Caco-2 (cell line): ENCODE measurements at regions of chr1 and their contacts with region 1.

Region 1: DNA sequence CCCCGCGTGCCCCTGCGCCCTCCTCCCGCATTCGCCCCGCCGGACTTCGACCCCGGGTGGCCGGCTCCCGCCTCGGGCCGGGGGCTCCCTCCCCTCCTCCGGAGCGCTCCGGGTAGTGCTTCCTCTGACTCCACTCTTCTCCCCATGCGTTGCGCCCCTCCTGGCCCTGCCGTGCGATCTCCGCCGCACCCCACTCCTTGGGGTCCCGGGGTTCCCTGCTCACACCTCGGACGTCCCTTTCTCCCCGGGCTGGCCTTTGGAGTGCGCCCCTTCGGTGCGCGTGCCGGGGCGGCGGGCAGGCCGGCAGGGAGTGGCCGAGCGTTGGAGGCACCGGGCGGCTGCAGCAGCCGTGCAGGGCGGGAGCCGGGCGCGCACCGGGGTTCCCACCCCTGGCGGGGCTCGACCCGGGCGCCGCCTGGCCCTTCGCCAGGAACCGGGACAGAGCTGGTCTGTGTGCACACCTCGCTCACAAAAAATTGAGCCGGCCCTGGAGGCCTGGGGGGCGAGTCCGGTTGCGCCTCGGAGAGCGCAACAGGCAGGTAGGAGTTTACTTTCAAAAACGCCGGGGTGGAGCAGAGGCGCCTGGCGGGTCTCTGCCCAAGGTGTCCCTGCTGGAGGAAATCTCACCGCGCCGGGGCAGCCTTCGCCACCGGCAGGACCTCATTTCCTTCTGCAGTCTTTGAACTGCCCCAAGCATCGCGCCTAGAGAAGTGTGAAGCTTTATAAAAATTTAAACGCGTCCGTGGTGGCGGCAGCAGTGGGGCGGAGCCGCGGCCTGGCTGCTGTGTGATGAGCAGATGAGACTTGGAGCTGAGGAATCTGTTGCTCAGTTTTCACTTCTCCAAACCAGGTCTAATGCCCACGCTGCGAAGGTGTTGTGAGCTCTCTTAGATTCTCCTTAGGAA is 650 bp downstream of the VANGL1 start:
- DNase-seq: peak; percentile 64 to 66
- H3K4me3 ChIP-seq: peak overlapping the region; percentile 78
- H3K4me3 Mint-ChIP-seq: peak overlapping the region; percentile 92
- H3K27ac Mint-ChIP-seq: peak overlapping the region; percentile 76
- H3K4me1 ChIP-seq: peaks cover 20% of the 10 kb centered on the region
- H3K4me1 Mint-ChIP-seq: peaks cover 4% of the 10 kb centered on the region
- H3K27me3 ChIP-seq: no peaks in the 10 kb centered on the region
- H3K27me3 Mint-ChIP-seq: no peaks in the 10 kb centered on the region
- CTCF ChIP-seq: peak in 1 of 2 experiments; percentile 30

Region 2: DNA sequence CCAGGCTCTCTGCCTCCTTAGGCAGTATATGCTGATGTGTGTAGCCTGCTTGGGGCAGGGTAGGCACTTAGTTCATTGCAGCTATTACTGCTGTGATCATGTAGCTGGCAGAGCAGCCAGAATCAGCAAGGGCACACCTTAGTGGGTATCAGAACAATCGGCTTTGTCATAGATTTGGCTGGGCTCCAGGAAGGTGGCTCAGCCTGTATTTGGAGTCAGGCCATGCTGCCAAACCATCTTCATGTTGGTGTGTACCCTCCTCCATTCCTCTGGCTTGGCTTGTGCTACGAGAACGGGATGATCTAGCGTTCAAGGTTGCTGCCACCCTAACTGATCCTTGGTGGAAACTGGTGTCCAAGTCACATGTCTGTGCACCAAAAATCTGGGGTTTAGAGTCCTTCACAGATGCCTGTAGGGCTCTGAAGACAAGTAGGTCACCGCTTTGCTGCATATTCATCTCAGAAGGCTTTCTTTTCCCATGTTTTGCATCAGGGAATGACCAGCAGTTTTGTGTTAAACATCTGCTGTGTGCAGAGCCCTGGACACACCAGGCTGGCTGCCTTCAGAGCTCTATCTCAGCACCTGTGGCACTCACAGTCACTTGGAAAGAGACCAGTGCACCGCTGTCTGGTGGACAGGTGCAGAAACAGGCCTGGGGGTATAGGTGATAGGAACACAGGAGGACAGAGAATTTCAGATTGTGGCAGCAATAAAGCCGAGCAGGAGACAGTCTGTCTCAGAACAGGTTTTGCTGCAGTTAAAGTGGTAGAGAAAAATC is 23.1 kb after region 1 on chr1:
- CTCF ChIA-PET with region 1: no interaction called
- POLR2A ChIA-PET with region 1: no interaction called
- intact Hi-C with region 1: no loop called
- DNase-seq: no peak
- H3K4me3 ChIP-seq: no peak overlapping the region
- H3K4me3 Mint-ChIP-seq: no peak overlapping the region
- H3K27ac Mint-ChIP-seq: no peak overlapping the region
- H3K4me1 ChIP-seq: peaks cover 7% of the 10 kb centered on the region
- H3K4me1 Mint-ChIP-seq: no peaks in the 10 kb centered on the region
- H3K27me3 ChIP-seq: no peaks in the 10 kb centered on the region
- H3K27me3 Mint-ChIP-seq: no peaks in the 10 kb centered on the region
- CTCF ChIP-seq: no peak

Region 3: GRCh38 chr1:115764541-115764940 is 122.1 kb after region 1 on chr1:
- CTCF ChIA-PET with region 1: interaction called, 4 read pairs
- POLR2A ChIA-PET with region 1: no interaction called
- intact Hi-C with region 1: loop called (anchors 2 kb)
- DNase-seq: peak; percentile 47 to 57
- H3K4me3 ChIP-seq: no peak overlapping the region
- H3K4me3 Mint-ChIP-seq: no peak overlapping the region
- H3K27ac Mint-ChIP-seq: no peak overlapping the region
- H3K4me1 ChIP-seq: no peaks in the 10 kb centered on the region
- H3K4me1 Mint-ChIP-seq: peaks cover 11% of the 10 kb centered on the region
- H3K27me3 ChIP-seq: no peaks in the 10 kb centered on the region
- H3K27me3 Mint-ChIP-seq: no peaks in the 10 kb centered on the region
- CTCF ChIP-seq: peak; percentile 46 to 50

Region 4: DNA sequence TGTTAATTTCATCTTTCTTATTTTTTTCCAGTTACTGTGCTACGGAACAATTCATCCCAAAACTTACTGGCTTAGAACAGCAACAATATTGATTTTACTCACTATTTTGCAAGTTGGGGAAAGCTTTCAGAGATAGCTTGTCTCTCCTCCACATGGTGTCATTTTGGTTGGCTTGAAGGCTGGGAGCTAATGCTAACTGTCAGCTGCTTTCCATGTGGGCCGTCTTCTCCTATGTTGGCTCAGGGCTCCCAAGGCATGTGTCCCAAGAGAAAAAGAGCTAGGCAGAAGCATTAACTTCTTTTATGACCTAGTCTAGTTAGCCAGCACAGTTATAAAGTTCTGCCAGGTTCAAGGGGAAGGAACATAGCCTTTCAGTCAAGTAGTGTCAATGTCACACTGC is 160.0 kb after region 1 on chr1:
- CTCF ChIA-PET with region 1: no interaction called
- POLR2A ChIA-PET with region 1: no interaction called
- intact Hi-C with region 1: no loop called
- DNase-seq: no peak
- H3K4me3 ChIP-seq: no peak overlapping the region
- H3K4me3 Mint-ChIP-seq: no peak overlapping the region
- H3K27ac Mint-ChIP-seq: no peak overlapping the region
- H3K4me1 ChIP-seq: no peaks in the 10 kb centered on the region
- H3K4me1 Mint-ChIP-seq: no peaks in the 10 kb centered on the region
- H3K27me3 ChIP-seq: no peaks in the 10 kb centered on the region
- H3K27me3 Mint-ChIP-seq: peaks cover 2% of the 10 kb centered on the region
- CTCF ChIP-seq: no peak